Panc1 (cell line): ENCODE measurements at regions of chr2 and their contacts with region 1.

Region 1: GRCh38 chr2:75019790-75020189 is 61.3 kb downstream of the POLE4 start:
- DNase-seq: no peak
- ATAC-seq: no peak
- H3K4me3 ChIP-seq: no peak overlapping the region
- H3K27ac ChIP-seq: no peak overlapping the region
- H3K4me1 ChIP-seq: no peaks in the 10 kb centered on the region
- H3K27me3 ChIP-seq: no peaks in the 10 kb centered on the region
- CTCF ChIP-seq: no peak

Region 2: GRCh38 chr2:75238670-75239330 is 219.0 kb after region 1 on chr2:
- CTCF ChIA-PET with region 1: no interaction called
- POLR2A ChIA-PET with region 1: no interaction called
- in situ Hi-C with region 1: no loop called
- intact Hi-C with region 1: no loop called
- DNase-seq: peak; percentile 50
- ATAC-seq: no peak
- H3K4me3 ChIP-seq: no peak overlapping the region
- H3K27ac ChIP-seq: no peak overlapping the region
- H3K4me1 ChIP-seq: no peaks in the 10 kb centered on the region
- H3K27me3 ChIP-seq: no peaks in the 10 kb centered on the region; the same call in 1 of the 2 replicates
- CTCF ChIP-seq: no peak

Region 3: GRCh38 chr2:75340560-75341330 is 321.0 kb after region 1 on chr2:
- CTCF ChIA-PET with region 1: no interaction called
- POLR2A ChIA-PET with region 1: no interaction called
- in situ Hi-C with region 1: no loop called
- intact Hi-C with region 1: no loop called
- DNase-seq: no peak
- ATAC-seq: no peak
- H3K4me3 ChIP-seq: no peak overlapping the region
- H3K27ac ChIP-seq: no peak overlapping the region
- H3K4me1 ChIP-seq: no peaks in the 10 kb centered on the region
- H3K27me3 ChIP-seq: no peaks in the 10 kb centered on the region; the same call in 1 of the 2 replicates
- CTCF ChIP-seq: no peak

Region 4: DNA sequence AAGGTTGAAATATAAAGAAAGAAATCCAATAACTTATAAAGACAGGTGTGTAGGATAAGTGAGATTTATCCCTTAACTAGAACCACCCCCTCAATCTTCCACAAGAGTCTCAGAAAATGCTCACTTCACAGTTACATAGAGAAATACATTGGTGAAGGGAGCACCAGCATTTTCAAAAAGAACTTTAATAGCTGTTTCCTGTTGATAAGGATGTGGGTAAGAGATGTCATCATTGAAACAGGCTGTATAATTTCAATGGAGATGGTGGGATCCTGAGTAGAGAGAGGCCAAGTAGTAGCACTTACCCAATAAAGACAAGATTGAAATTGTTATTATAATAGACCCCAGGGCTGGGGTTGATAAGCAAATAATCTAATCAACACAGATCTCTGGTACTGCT is 341.7 kb after region 1 on chr2:
- CTCF ChIA-PET with region 1: no interaction called
- POLR2A ChIA-PET with region 1: interaction called, 12 read pairs
- in situ Hi-C with region 1: no loop called
- intact Hi-C with region 1: no loop called
- DNase-seq: no peak
- ATAC-seq: no peak
- H3K4me3 ChIP-seq: no peak overlapping the region
- H3K27ac ChIP-seq: no peak overlapping the region
- H3K4me1 ChIP-seq: no peaks in the 10 kb centered on the region
- H3K27me3 ChIP-seq: no peaks in the 10 kb centered on the region
- CTCF ChIP-seq: no peak